Natural killer cell (primary cell): ENCODE measurements at regions of chr19 and their contacts with region 1.

Region 1: GRCh38 chr19:17226002-17226933 is at the start of gene OCEL1:
- DNase-seq: peak; percentile 97 to 99
- ATAC-seq: peak; percentile 89 to 97 (median 89)
- H3K4me3 ChIP-seq: peak within 1 kb of the TSS; percentile 78
- H3K4me3 Mint-ChIP-seq: peak within 1 kb of the TSS; percentile 98
- H3K27ac ChIP-seq: peak within 1 kb of the TSS; percentile 93
- H3K27ac Mint-ChIP-seq: peak within 1 kb of the TSS; percentile 96 to 99
- H3K4me1 ChIP-seq: peaks cover 21% of the 10 kb centered on the region
- H3K4me1 Mint-ChIP-seq: peaks cover 8 to 11% of the 10 kb centered on the region in 2 donors
- H3K27me3 ChIP-seq: no peaks in the 10 kb centered on the region
- H3K27me3 Mint-ChIP-seq: no peaks in the 10 kb centered on the region
- CTCF ChIP-seq: no peak
- total RNA-seq, gene OCEL1: 28.1 to 39.1 (median 37.0) TPM

Region 2: GRCh38 chr19:17075035-17075863 is 151.0 kb before region 1 on chr19 and contains the starts of genes HAUS8 and MYO9B:
- intact Hi-C with region 1: loop called (anchors 1 kb)
- DNase-seq: peak; percentile 99 to 100
- ATAC-seq: peak; percentile 89 to 98 (median 89)
- H3K4me3 ChIP-seq: peak within 1 kb of the TSS; percentile 83
- H3K4me3 Mint-ChIP-seq: peak within 1 kb of the TSS; percentile 98
- H3K27ac ChIP-seq: peak within 1 kb of the TSS; percentile 81
- H3K27ac Mint-ChIP-seq: peak within 1 kb of the TSS; percentile 92 to 96
- H3K4me1 ChIP-seq: peaks cover 57% of the 10 kb centered on the region
- H3K4me1 Mint-ChIP-seq: peaks cover 48 to 73% of the 10 kb centered on the region in 2 donors
- H3K27me3 ChIP-seq: no peaks in the 10 kb centered on the region
- H3K27me3 Mint-ChIP-seq: peaks cover 0 to 3% of the 10 kb centered on the region in 2 donors
- CTCF ChIP-seq: no peak
- total RNA-seq, gene HAUS8: 10.3 to 13.5 (median 10.4) TPM
- total RNA-seq, gene MYO9B: 321 to 378 (median 365) TPM

Region 3: GRCh38 chr19:17215125-17215971 is 10.9 kb before region 1 on chr19 and contains the start of gene USE1:
- intact Hi-C with region 1: loop called (anchors 1 kb)
- DNase-seq: peak; percentile 81 to 95
- ATAC-seq: peak; percentile 96 to 97 (median 96)
- H3K4me3 ChIP-seq: peak within 1 kb of the TSS; percentile 83
- H3K4me3 Mint-ChIP-seq: peak within 1 kb of the TSS; percentile 93
- H3K27ac ChIP-seq: peak within 1 kb of the TSS; percentile 93
- H3K27ac Mint-ChIP-seq: peak within 1 kb of the TSS; percentile 92 to 96
- H3K4me1 ChIP-seq: peaks cover 17% of the 10 kb centered on the region
- H3K4me1 Mint-ChIP-seq: peaks cover 8 to 18% of the 10 kb centered on the region in 2 donors
- H3K27me3 ChIP-seq: no peaks in the 10 kb centered on the region
- H3K27me3 Mint-ChIP-seq: no peaks in the 10 kb centered on the region
- CTCF ChIP-seq: no peak
- total RNA-seq, gene USE1: 16.4 to 21.1 (median 20.9) TPM

Region 4: DNA sequence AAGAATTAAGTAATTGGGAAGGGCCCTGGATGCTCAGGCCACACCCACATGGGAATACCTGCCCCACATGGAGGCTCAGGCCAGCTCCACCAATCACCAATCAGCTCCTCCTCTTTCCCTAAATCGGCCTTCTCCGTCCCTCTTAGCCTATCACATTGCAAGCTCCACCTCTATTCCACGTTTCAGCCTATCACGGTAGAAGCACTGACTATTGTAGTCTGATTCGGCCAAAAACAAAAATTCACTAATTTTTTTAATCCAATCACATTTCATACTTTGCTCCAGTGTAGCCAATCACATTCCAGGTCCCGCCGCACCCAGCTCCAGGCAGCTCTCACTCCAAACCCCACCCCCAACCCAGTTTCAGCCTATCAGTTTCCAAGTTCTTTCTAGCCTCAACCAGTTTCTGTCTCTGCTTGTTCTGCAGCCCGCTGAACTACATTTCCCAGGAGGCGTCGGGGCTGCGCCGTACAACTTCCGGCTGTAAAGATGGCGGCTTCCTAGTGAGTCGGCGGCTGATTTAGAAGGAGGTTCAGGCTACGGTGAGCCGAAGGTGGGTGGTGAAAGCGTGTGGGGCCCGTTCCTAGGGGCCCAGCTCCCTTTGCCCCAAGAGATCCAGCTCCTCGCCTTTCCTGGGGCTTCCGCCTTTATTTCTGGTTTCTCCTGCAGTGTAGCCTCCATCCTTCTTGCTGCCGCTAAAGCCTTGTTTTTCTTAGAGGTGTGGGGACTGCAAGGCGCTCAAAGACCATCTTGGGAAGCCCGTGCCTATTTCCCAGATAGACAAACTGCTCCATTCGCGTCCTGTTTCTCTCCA is 40.9 kb after region 1 on chr19 and contains the start of gene BABAM1:
- intact Hi-C with region 1: loop called (anchors 5 kb)
- DNase-seq: peak; percentile 86 to 98
- ATAC-seq: peak; percentile 90 to 97 (median 91)
- H3K4me3 ChIP-seq: peak within 1 kb of the TSS; percentile 82
- H3K4me3 Mint-ChIP-seq: peak within 1 kb of the TSS; percentile 88
- H3K27ac ChIP-seq: peak within 1 kb of the TSS; percentile 63
- H3K27ac Mint-ChIP-seq: peak within 1 kb of the TSS; percentile 85
- H3K4me1 ChIP-seq: peaks cover 24% of the 10 kb centered on the region
- H3K4me1 Mint-ChIP-seq: peaks cover 15 to 16% of the 10 kb centered on the region in 2 donors
- H3K27me3 ChIP-seq: no peaks in the 10 kb centered on the region
- H3K27me3 Mint-ChIP-seq: no peaks in the 10 kb centered on the region
- CTCF ChIP-seq: no peak
- total RNA-seq, gene BABAM1: 106 to 127 (median 106) TPM